Activated CD4-positive, alpha-beta memory T cell treated with anti-CD3 and anti-CD28 coated beads for 36 hours (primary cell): ENCODE measurements at regions of chr19 and their contacts with region 1.

Region 1: DNA sequence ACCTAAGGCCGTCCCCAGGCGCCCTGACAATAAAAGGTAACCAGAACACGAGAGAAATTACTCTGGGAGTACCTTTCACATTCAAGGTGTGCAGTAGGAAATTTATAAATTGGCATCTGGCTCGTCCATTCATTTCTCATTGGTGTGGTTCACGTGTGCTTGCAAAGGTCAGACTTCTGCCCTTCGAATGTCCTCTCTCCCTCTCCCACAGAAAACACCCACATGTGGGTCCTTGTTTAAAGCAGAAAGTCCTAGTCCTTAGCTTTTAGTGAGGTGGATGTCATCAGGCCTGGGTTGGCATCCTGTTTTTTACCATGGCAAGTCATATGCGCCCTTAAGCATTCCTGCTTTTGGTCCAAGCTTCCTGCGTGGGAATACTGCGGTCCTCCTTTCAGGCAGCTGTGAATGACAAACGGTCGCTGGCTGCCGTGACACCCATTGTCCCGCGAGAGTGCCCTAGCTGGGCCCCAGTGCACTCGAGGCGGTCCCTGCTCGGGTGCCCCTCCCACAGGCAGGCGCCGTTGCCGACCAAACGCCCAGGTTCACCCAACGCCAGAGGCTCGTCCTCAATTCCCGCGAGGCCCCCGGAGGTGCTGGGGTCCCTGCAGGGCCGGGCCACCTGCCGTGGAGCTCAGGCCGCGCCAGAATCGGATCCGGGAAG is at the start of gene NUDT19:
- DNase-seq: peak; percentile 90
- H3K4me3 Mint-ChIP-seq: peak within 1 kb of the TSS; percentile 90
- H3K27ac Mint-ChIP-seq: peak within 1 kb of the TSS; percentile 87
- H3K4me1 Mint-ChIP-seq: peaks cover 47% of the 10 kb centered on the region
- H3K27me3 Mint-ChIP-seq: no peaks in the 10 kb centered on the region
- total RNA-seq, gene NUDT19: 14.9 to 15.0 TPM

Region 2: GRCh38 chr19:32748497-32748896 is 57.1 kb after region 1 on chr19:
- CTCF ChIA-PET with region 1: no interaction called
- POLR2A ChIA-PET with region 1: no interaction called
- intact Hi-C with region 1: loop called (anchors 1 kb)
- DNase-seq: peak; percentile 10
- H3K4me3 Mint-ChIP-seq: no peak overlapping the region
- H3K27ac Mint-ChIP-seq: no peak overlapping the region
- H3K4me1 Mint-ChIP-seq: peaks cover 6% of the 10 kb centered on the region
- H3K27me3 Mint-ChIP-seq: peaks cover 16% of the 10 kb centered on the region

Region 3: GRCh38 chr19:32824906-32825608 is 133.6 kb after region 1 on chr19:
- CTCF ChIA-PET with region 1: interaction called, 3 read pairs
- POLR2A ChIA-PET with region 1: no interaction called
- intact Hi-C with region 1: loop called (anchors 5 kb)
- DNase-seq: no peak
- H3K4me3 Mint-ChIP-seq: no peak overlapping the region
- H3K27ac Mint-ChIP-seq: no peak overlapping the region
- H3K4me1 Mint-ChIP-seq: peaks cover 11% of the 10 kb centered on the region
- H3K27me3 Mint-ChIP-seq: peaks cover 2% of the 10 kb centered on the region

Region 4: GRCh38 chr19:33022472-33023116 is 331.2 kb after region 1 on chr19:
- CTCF ChIA-PET with region 1: no interaction called
- POLR2A ChIA-PET with region 1: no interaction called
- intact Hi-C with region 1: no loop called
- DNase-seq: no peak
- H3K4me3 Mint-ChIP-seq: no peak overlapping the region
- H3K27ac Mint-ChIP-seq: no peak overlapping the region
- H3K4me1 Mint-ChIP-seq: no peaks in the 10 kb centered on the region
- H3K27me3 Mint-ChIP-seq: peaks cover 3% of the 10 kb centered on the region

Region 5: GRCh38 chr19:33080761-33081681 is 389.6 kb after region 1 on chr19 and contains the start of gene GPATCH1:
- CTCF ChIA-PET with region 1: interaction called, 12 read pairs
- POLR2A ChIA-PET with region 1: no interaction called
- intact Hi-C with region 1: no loop called
- DNase-seq: peak; percentile 93
- H3K4me3 Mint-ChIP-seq: peak within 1 kb of the TSS; percentile 94
- H3K27ac Mint-ChIP-seq: peak within 1 kb of the TSS; percentile 83
- H3K4me1 Mint-ChIP-seq: peaks cover 23% of the 10 kb centered on the region
- H3K27me3 Mint-ChIP-seq: no peaks in the 10 kb centered on the region
- total RNA-seq, gene GPATCH1: 8.9 to 9.9 TPM